Aorta (tissue), 5 donors: ENCODE measurements at regions of chr3 and their contacts with region 1.

Region 1: GRCh38 chr3:53845103-53845880 is 927 bp downstream of the CHDH start:
- DNase-seq: peak; percentile 70 to 85
- ATAC-seq: peak; percentile 54
- H3K4me3 ChIP-seq: peak overlapping the region; percentile 63 to 71
- H3K27ac ChIP-seq: no peak overlapping the region
- H3K4me1 ChIP-seq: peaks cover 0 to 1% of the 10 kb centered on the region in 2 donors
- H3K27me3 ChIP-seq: no peaks in the 10 kb centered on the region

Region 2: DNA sequence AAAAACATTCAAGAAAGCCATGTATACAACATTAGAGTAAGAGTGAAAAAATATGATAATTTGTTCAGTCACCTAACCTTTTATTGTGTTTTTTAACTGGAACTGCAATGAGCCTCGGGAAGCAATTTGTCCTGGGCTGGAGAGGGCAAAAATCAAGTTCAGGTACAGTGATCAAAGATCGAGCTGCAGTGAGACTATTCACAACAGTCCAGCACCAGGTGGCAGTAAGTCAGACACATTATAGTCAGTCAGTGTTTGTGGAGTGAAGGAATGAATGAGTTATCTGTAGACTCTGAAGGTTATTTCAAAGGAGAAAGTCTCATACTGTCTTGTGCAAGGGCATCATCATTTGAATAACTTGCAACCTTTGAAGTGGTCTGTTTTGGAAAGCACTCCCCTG is 115.7 kb before region 1 on chr3:
- intact Hi-C with region 1: loop called in 1 of 2 experiments (anchors 5 kb)
- DNase-seq: no peak
- ATAC-seq: no peak
- H3K4me3 ChIP-seq: no peak overlapping the region
- H3K27ac ChIP-seq: no peak overlapping the region
- H3K4me1 ChIP-seq: peaks cover 0 to 3% of the 10 kb centered on the region in 2 donors
- H3K27me3 ChIP-seq: no peaks in the 10 kb centered on the region

Region 3: DNA sequence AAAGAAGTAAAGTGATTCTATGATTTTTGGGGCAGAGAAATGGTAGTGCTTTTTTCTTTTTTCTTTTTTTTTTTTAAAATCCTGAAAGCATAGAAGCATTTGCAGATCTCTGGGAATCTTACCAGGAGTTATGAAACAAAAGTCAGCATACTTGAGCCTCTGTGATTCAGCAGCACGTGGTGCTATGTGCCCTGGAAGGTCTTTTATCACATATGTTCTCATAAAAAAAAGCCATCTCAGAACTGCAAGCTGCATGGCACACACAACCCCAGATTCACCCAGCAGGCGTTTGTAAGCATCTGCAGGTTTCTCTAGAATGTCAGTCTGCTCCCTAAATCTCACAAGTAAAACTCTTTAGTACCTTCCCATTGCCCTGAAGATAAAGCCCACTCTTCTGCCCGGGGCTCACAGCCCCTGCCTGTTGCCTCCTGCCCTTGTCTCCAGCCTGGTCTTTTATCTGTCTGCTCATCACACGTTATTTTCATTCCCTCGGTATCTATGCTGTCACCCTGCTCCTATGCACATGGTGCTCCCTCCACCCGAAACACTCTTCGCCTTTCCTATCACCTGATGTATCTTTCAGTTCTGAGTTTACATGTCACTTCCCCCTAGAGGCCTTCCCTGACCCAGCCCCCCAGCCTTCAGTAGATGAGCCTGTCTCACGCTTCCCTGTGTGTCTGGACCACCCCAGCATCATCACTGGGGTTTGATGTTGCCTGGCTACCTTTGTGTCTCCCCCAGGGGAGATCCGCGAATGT is 71.5 kb before region 1 on chr3:
- intact Hi-C with region 1: loop called in 1 of 2 experiments (anchors 5 kb)
- DNase-seq: no peak
- ATAC-seq: peak; percentile 71
- H3K4me3 ChIP-seq: no peak overlapping the region
- H3K27ac ChIP-seq: peak overlapping the region in 1 of 2 donors; percentile 10
- H3K4me1 ChIP-seq: peaks cover 4 to 5% of the 10 kb centered on the region in 2 donors
- H3K27me3 ChIP-seq: no peaks in the 10 kb centered on the region

Region 4: GRCh38 chr3:53891497-53892285 is 46.4 kb after region 1 on chr3 and contains the start of gene SELENOK:
- intact Hi-C with region 1: no loop called
- DNase-seq: peak; percentile 99
- ATAC-seq: peak; percentile 100
- H3K4me3 ChIP-seq: peak within 1 kb of the TSS; percentile 37 to 52
- H3K27ac ChIP-seq: peak within 1 kb of the TSS; percentile 79 to 80
- H3K4me1 ChIP-seq: peaks cover 0 to 9% of the 10 kb centered on the region in 2 donors
- H3K27me3 ChIP-seq: no peaks in the 10 kb centered on the region
- total RNA-seq, gene SELENOK: 44.0 to 62.3 TPM